ENCODE measurements at regions of chr1 and their contacts with region 1.

Region 1: DNA sequence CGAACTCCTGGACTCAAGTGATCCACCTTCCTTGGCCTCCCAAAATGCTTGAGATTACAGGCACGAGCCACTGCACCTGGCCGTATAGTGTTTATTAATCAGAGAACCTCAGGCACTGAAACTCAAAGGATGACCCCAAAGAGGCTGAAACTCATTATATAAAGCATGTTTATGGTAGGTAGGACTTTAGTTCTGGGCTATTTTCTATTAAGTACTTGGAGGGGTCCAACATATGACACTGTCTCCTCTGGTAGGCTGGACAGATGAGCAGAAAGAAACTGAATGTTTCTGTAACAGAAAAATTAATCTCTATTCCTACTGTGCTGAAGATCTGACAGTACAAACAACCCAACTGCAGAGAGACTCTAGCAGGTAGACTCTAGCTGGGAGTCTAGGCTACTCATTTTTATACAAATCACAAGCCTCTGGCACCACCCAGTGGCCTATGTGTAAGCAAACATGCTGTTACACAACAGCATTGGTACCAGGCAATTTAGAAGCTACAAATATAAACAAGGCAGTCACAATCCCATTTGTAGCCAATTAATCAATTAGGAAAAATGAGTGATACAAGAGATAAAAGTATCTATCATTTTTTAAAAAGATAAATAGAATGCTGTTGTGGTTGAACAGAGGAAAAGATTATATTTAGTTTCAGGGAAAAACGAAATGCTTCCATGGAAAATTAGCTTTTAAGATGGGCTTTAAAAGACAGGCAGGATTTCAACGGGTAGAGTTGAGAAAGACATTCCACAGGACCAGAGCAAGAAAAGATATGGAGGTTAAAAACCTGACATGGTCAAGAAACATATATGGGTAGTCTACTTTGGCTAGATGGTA is 10.4 kb downstream of the DCAF8 start:
- DNase-seq: peak; percentile 56 to 94 (median 84)

Region 2: GRCh38 chr1:160098852-160099561 is 152.9 kb before region 1 on chr1:
- intact Hi-C with region 1: loop called (anchors 2 kb)
- DNase-seq: peak; percentile 95 to 100 (median 99)

Region 3: DNA sequence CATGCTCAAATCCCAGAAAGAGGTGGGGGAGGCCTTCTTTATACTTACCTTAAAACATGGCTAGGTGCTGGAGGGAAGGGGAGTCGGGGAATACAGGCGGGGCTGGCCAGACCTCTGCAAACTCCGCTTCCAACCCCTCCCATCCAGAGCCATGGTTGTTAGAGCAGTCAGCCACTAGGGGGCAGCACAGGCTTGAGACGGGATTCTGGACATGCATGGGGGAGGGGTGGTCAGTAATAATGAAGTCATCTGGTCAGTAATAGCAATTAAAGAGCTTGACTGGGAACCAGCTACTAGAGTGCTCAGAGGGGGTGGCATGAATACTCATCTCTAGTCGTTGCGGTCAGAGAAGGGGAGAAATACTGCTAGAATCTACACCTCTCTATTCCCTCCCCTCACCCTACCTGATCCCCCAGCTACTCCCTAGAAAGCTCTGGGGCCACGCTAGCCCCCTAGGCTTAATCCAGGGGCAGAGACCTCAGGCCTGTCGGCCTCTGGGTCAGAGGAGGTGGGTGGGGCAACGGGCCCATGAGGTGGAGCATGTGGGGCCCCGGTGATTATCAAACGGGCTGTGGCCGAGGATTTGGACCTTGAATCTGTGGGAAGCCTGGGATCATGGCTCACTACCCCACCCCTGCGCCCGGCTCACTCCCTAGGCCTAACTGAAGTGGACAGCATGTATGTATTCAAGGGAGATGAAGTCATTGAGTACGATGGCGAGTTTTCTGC is 58.7 kb before region 1 on chr1:
- intact Hi-C with region 1: loop called (anchors 5 kb)
- DNase-seq: peak; percentile 61 to 96 (median 89)

Region 4: DNA sequence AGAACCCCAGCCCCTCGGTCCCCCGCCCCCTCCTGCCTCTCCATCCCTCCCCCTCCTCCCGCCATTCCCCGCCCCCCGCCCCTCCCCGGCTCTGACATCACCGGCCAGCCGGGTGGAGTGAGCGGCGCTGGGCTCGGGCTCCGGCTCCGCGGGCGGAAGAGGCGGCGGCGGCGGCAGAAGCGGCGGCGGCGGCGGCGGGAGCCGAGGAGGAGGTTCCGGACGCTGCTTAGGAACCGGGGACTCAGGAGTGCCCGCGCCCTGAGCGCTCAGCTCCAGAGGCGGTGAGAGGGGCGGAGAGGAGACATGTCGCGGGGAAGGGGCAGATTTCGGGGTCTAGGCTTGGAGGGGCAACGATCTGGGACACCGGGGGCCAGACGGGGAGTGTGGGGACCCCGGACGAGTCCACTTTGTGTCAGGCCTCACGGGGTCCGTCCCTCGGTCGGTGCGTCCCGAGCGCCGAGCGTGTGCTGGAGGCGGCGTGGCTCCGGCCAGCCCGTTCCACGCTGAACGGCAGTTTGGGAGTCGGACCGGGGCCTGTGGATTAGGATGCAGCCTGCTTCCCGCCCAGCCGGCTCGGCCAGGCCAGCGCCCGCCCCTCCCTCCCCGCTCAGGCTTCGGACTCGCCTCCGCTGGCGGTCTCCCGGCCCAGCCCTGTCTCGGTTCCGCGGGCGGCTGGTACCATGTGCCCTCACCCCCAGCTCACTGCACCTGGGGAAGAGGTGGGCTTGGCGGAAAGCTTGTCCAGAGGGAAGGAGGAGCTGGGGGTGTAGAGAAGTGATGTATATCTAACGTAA is 46.5 kb before region 1 on chr1 and contains the start of gene PEA15:
- intact Hi-C with region 1: loop called (anchors 5 kb)
- DNase-seq: peak in 41 of 42 donors; percentile 42 to 92 (median 82)

Region 5: GRCh38 chr1:160226623-160227022 is 25.3 kb before region 1 on chr1:
- intact Hi-C with region 1: no loop called
- DNase-seq: no peak

Region 6: DNA sequence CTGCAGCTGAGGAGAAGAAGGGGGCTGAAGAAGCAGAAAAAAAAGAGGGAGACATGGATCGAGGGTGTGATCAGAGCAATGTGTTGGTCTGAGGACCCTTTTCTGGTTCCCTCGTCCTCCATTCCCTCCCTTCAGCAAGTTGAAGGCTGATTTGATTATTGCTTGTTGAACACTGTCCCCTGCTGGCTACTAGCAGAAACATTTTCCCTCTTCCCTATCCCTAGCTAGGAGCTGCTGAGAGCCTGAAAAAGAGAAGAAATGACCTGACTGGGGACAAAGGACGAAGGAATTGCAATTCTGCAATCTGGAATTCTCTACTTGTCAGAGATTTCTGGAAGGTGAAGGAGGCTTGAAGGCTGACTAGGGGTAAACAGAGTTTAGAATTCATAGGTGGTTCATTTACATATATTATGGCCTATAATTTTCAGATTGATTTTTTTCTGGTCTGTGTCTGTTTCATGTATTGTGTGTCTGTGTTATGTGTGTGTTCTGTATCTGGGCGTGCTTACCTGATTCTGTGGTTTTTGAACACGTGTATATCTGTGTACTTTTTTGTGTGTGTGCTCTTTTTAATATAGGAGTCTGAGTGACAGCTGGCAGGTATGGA is 124.7 kb after region 1 on chr1:
- intact Hi-C with region 1: loop called (anchors 10 kb)
- DNase-seq: peak in 27 of 42 donors; percentile 43 to 83 (median 69)

Measured in head of caudate nucleus (tissue), 42 donors.